Activated T-helper 2 cell treated with anti-CD3 and anti-CD28 coated beads, Interferon-gamma antibody, Interleukin-2, Interleukin-4, amounts not matched to agents 10 μg/mL and 5 μg/mL and 100 μg/mL, durations not matched to agents 14 hours and 24 hours and 36 hours (primary cell): ENCODE measurements at regions of chr11 and their contacts with region 1.

Region 1: DNA sequence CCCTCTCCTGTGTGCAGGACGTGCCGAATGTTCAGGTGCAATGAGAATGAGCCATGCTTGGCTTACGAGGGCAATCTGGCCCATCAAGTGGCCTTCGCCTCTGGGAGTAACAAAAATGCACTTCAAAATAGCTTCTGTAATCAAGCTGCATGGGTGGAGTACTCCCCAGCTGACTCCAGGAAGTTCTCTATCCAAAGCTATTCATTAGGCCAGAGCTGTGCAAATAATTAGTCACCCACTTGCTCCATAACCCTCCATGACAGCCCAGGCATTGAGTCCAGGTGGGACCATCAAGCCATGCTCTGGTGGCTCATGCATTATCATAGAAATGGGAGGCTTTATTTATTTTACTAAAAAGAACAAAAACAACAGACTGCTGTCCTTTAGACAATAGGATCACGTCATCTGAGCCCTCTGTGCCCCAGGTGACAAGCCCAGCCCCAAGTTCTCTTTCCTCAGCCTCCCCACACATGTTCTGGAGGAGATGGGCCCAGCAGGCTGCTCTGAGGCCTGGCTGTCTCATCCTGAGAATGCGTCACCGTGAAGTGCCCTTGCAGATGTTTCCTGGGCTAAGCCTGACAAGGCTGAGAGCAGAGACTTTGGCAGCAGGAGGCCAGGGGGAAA is 244.7 kb downstream of the ETS1 start:
- DNase-seq: peak; percentile 55
- H3K4me3 Mint-ChIP-seq: peak overlapping the region; percentile 7
- H3K27ac Mint-ChIP-seq: peak overlapping the region; percentile 81
- H3K4me1 Mint-ChIP-seq: peaks cover 73% of the 10 kb centered on the region
- H3K27me3 Mint-ChIP-seq: no peaks in the 10 kb centered on the region

Region 2: DNA sequence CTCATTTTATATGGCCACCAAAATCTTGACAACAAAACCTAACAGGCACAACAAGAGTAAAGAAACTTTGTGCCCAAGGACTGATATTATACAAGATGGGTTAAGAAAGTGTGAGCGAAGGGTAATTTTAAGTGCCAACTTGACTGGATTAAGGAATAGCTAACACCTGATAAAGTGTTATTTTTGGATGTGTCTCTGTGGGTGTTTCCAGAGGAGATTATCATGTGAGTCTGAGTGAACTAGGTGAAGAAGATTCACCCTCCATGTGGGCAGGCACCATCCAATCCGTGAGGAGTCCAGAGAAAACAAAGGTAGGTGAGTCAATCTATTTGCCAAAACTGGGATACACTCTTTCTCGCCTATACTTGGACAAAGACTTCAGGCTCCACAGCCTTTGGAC is 216.9 kb before region 1 on chr11:
- intact Hi-C with region 1: no loop called
- DNase-seq: no peak
- H3K4me3 Mint-ChIP-seq: no peak overlapping the region
- H3K27ac Mint-ChIP-seq: no peak overlapping the region
- H3K4me1 Mint-ChIP-seq: no peaks in the 10 kb centered on the region
- H3K27me3 Mint-ChIP-seq: no peaks in the 10 kb centered on the region

Region 3: DNA sequence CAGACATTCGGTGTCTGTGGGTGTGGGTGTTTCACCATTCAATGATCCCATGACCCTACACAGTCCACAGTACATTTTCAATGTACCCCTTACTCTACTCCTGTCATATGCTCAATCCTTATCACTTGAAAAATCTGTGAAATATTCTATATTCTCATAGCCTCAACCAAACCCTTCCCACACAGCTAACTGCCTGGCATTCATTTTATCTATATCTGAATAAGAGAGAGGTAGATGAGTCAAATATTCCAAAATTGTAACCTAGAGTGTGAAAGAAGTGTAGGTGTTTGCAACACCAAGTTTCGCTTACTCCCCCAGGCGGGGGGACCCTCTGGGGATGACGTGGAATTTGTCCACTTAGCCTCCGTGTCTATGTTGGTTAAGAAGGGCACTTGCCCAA is 110.0 kb before region 1 on chr11:
- intact Hi-C with region 1: loop called (anchors 1 kb)
- DNase-seq: no peak
- H3K4me3 Mint-ChIP-seq: no peak overlapping the region
- H3K27ac Mint-ChIP-seq: peak overlapping the region; percentile 81
- H3K4me1 Mint-ChIP-seq: peaks cover 58% of the 10 kb centered on the region
- H3K27me3 Mint-ChIP-seq: no peaks in the 10 kb centered on the region

Region 4: DNA sequence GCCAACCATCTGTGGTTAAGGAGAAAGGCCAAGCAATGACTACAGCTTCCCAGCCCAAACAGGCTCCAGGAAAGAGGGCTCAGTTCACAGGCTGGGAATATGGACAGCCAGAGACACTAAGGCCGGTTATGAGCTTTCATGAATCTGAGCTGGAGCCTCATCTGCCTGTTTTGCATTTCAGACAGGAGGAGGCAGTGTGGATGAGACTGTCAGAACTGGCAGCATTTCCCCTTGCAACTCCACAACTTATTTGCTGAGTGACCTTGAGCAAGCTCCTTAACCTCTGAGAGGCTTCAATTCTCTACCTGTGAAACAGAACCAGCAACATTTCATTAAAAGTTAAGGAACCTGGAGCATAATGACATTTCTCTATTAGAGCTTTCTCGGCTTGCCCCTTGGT is 19.2 kb before region 1 on chr11:
- intact Hi-C with region 1: loop called (anchors 1 kb)
- DNase-seq: peak; percentile 44
- H3K4me3 Mint-ChIP-seq: peak overlapping the region; percentile 62
- H3K27ac Mint-ChIP-seq: peak overlapping the region; percentile 94
- H3K4me1 Mint-ChIP-seq: peaks cover 81% of the 10 kb centered on the region
- H3K27me3 Mint-ChIP-seq: no peaks in the 10 kb centered on the region

Region 5: GRCh38 chr11:128379587-128380580 is 37.3 kb after region 1 on chr11:
- intact Hi-C with region 1: loop called (anchors 1 kb)
- DNase-seq: peak; percentile 24
- H3K4me3 Mint-ChIP-seq: no peak overlapping the region
- H3K27ac Mint-ChIP-seq: peak overlapping the region; percentile 76
- H3K4me1 Mint-ChIP-seq: peaks cover 41% of the 10 kb centered on the region
- H3K27me3 Mint-ChIP-seq: no peaks in the 10 kb centered on the region

Region 6: GRCh38 chr11:128497061-128497775 is 154.6 kb after region 1 on chr11:
- intact Hi-C with region 1: loop called (anchors 1 kb)
- DNase-seq: no peak
- H3K4me3 Mint-ChIP-seq: peak overlapping the region; percentile 57
- H3K27ac Mint-ChIP-seq: peak overlapping the region; percentile 94
- H3K4me1 Mint-ChIP-seq: peaks cover 94% of the 10 kb centered on the region
- H3K27me3 Mint-ChIP-seq: no peaks in the 10 kb centered on the region

Region 7: GRCh38 chr11:128630367-128631230 is 288.0 kb after region 1 on chr11:
- intact Hi-C with region 1: loop called (anchors 2 kb)
- DNase-seq: peak; percentile 81
- H3K4me3 Mint-ChIP-seq: peak overlapping the region; percentile 28
- H3K27ac Mint-ChIP-seq: peak overlapping the region; percentile 97
- H3K4me1 Mint-ChIP-seq: peaks cover 59% of the 10 kb centered on the region
- H3K27me3 Mint-ChIP-seq: no peaks in the 10 kb centered on the region